Stomach (tissue), 19 donors: ENCODE measurements at regions of chr11 and their contacts with region 1.

Region 1: DNA sequence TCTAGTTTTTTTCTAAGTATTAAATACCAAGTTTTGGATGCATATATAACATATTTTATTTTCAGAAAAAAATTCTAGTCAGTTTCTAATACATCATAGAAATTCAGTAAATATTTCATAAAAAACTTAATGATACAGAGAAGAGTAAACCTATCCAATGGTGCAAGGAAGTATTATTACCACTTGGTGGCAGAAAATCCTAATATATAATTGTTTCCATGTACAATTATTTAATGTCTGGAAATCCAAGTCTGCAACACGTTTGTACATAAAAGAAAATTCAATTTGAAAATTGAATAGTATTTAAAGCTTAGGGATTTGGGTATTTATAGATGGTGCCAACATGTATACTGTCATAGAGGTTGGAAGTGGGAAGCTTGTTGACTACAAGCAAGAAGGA is 127.0 kb downstream of the TRPC6 start:
- DNase-seq: peak in 1 of 2 donors; percentile 42
- H3K4me3 ChIP-seq: no peak overlapping the region
- H3K27ac ChIP-seq: no peak overlapping the region
- H3K4me1 ChIP-seq: no peaks in the 10 kb centered on the region
- H3K27me3 ChIP-seq: no peaks in the 10 kb centered on the region
- CTCF ChIP-seq: peak in 2 of 7 experiments; percentile 46 to 47
- EP300 ChIP-seq: no peak
- POLR2A ChIP-seq: no peak

Region 2: DNA sequence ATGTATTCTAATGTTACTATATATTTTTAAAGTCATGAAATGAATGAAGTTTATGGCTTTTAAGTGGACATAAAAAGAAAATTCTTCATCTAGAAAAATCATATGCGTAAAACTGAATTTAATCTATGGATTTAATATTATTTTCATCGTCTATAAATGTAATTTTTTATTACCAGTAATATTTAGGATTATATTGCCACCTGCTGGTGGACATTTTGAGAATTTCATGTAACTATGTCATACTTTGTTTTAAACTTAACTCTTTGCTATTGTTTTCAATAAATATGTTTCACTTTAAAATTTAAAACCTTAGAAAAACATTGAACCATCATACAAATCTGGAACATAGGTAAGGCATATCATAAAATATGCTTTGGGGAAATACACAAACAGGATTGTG is 391.4 kb after region 1 on chr11:
- intact Hi-C with region 1: loop called (anchors 10 kb)
- DNase-seq: peak in 1 of 2 donors; percentile 48
- H3K4me3 ChIP-seq: no peak overlapping the region
- H3K27ac ChIP-seq: no peak overlapping the region
- H3K4me1 ChIP-seq: no peaks in the 10 kb centered on the region
- H3K27me3 ChIP-seq: no peaks in the 10 kb centered on the region
- CTCF ChIP-seq: peak in 3 of 7 experiments; percentile 43 to 53 (median 49)
- EP300 ChIP-seq: no peak
- POLR2A ChIP-seq: no peak